Mammary epithelial cell (primary cell): ENCODE measurements at regions of chr4 and their contacts with region 1.

Region 1: GRCh38 chr4:39469429-39470077 is 10.7 kb downstream of the LIAS start:
- DNase-seq: peak; percentile 69
- H3K4me3 ChIP-seq: no peak overlapping the region
- H3K27ac ChIP-seq: peak overlapping the region; percentile 36
- H3K4me1 ChIP-seq: no peaks in the 10 kb centered on the region
- H3K27me3 ChIP-seq: no peaks in the 10 kb centered on the region
- CTCF ChIP-seq: peak; percentile 76 to 85

Region 2: DNA sequence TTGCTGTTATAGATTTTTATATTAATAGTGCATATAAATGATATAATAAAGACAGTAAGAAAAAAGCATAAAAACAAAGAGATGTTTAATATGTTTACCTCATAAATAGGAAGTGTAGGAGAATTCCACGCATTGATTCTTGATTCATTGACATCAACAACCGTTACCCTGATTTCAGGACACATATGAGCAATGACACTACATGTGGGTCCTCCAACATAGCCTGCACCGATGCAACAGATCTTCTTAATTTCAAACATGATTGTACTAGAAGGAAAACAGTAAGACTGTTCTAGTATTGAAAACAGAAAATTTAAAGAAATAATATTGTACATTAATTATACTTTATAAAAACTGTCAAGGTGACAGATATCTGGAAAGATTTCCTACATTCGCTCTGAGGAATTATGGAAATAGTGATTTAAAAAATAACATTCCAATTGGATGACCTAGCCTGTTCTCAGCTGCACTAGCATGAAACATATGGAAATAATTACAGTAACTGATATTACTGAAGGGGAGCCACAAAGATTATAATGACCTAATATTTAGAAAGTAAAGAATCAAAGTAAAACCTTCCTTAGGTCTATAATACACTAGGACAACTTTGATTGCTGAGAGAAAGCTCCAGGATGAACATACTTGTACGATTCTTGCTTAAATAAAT is 51.8 kb after region 1 on chr4:
- CTCF ChIA-PET with region 1: no interaction called
- dilution Hi-C with region 1: loop called (anchors 5 kb)
- in situ Hi-C with region 1: no loop called
- intact Hi-C with region 1: no loop called
- DNase-seq: no peak
- H3K4me3 ChIP-seq: no peak overlapping the region
- H3K27ac ChIP-seq: no peak overlapping the region
- H3K4me1 ChIP-seq: no peaks in the 10 kb centered on the region
- H3K27me3 ChIP-seq: no peaks in the 10 kb centered on the region
- CTCF ChIP-seq: no peak

Region 3: GRCh38 chr4:39527273-39528060 is 57.9 kb after region 1 on chr4 and contains the start of gene UGDH:
- CTCF ChIA-PET with region 1: no interaction called
- dilution Hi-C with region 1: loop called (anchors 5 kb)
- in situ Hi-C with region 1: no loop called
- intact Hi-C with region 1: loop called (anchors 1 kb)
- DNase-seq: peak; percentile 98
- H3K4me3 ChIP-seq: peak within 1 kb of the TSS; percentile 68 to 89 (median 87)
- H3K27ac ChIP-seq: peak within 1 kb of the TSS; percentile 85
- H3K4me1 ChIP-seq: peaks cover 8% of the 10 kb centered on the region
- H3K27me3 ChIP-seq: no peaks in the 10 kb centered on the region
- CTCF ChIP-seq: no peak
- total RNA-seq, gene UGDH: 46.8 to 69.0 TPM

Region 4: DNA sequence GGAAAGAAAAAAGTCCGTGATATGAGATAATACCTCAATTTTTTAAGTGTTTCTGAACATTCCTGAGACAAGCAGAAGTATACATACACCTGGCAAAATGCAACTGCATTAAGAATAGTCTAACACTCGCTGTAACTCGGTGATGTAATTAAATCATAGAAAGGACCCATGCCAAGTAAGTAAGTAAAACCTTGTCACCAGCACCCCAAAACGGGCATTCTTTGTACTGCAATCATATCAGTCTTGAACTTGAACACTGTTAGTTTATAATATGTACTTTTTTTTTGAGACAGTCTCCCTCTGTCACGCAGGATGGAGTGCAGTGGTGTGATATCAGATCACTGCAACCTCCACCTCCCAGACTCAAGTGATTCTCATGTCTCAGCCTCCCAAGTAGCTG is 121.7 kb after region 1 on chr4:
- CTCF ChIA-PET with region 1: interaction called, 6 read pairs
- dilution Hi-C with region 1: no loop called
- in situ Hi-C with region 1: no loop called
- intact Hi-C with region 1: loop called (anchors 1 kb)
- DNase-seq: peak; percentile 31
- H3K4me3 ChIP-seq: no peak overlapping the region
- H3K27ac ChIP-seq: no peak overlapping the region
- H3K4me1 ChIP-seq: no peaks in the 10 kb centered on the region
- H3K27me3 ChIP-seq: no peaks in the 10 kb centered on the region
- CTCF ChIP-seq: peak; percentile 23 to 46

Region 5: DNA sequence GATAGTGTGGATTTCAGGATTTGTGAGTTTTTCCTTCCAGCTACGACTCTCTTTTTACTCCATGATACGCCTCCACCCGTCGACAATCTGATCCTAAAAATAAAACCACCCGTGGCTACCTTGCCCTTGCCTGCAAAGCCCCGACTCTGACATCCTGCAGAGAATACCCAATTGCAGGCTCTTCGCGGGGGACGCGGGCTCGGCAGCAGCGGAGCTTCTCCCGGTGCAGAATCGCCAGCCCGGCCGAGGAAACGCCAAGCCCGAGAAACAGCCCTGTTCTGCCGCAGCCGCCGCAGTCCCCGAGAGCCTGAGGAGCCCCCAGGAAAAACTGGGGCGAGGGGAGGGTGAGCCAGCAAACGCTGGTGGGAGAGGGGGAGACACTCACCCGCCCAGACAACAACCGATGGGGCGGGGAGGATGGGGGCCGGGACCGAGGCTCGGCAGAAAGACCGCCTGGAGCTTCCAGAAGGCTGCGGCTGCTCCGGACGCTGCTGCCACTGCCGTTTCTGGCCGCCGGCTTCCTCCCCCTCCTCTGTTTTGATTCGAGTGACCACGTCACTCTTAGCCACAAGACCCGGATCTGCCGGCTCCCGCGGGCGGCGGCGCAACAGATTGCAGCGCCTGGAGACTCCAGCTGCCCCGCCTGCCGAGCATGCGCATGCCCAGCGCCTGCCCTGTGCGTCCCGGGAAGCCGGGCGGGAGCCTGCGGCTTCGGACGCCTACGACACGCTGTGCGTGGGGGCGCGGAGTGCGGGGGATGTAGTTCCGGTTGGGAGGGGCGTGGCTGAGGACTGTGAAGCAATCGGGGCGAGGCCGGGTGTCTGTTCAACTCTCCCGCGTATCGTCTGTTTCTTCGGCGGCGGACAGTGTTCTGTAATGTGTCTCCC is 169.0 kb after region 1 on chr4 and contains the start of gene SMIM14:
- CTCF ChIA-PET with region 1: no interaction called
- dilution Hi-C with region 1: no loop called
- in situ Hi-C with region 1: no loop called
- intact Hi-C with region 1: loop called (anchors 1 kb)
- DNase-seq: peak; percentile 98
- H3K4me3 ChIP-seq: peak within 1 kb of the TSS; percentile 66 to 93 (median 76)
- H3K27ac ChIP-seq: peak within 1 kb of the TSS; percentile 98
- H3K4me1 ChIP-seq: peaks cover 23% of the 10 kb centered on the region
- H3K27me3 ChIP-seq: no peaks in the 10 kb centered on the region
- CTCF ChIP-seq: peak in 1 of 2 donors; percentile 14
- total RNA-seq, gene SMIM14: 15.7 to 26.8 TPM

Region 6: GRCh38 chr4:39657465-39657864 is 187.9 kb after region 1 on chr4:
- CTCF ChIA-PET with region 1: no interaction called
- dilution Hi-C with region 1: no loop called
- in situ Hi-C with region 1: loop called in 1 of 2 experiments (anchors 10 kb)
- intact Hi-C with region 1: loop called (anchors 1 kb)
- DNase-seq: peak; percentile 8
- H3K4me3 ChIP-seq: no peak overlapping the region
- H3K27ac ChIP-seq: no peak overlapping the region
- H3K4me1 ChIP-seq: no peaks in the 10 kb centered on the region
- H3K27me3 ChIP-seq: no peaks in the 10 kb centered on the region
- CTCF ChIP-seq: no peak

Region 7: GRCh38 chr4:39977489-39978377 is 508.2 kb after region 1 on chr4 and contains the start of gene PDS5A:
- CTCF ChIA-PET with region 1: no interaction called
- dilution Hi-C with region 1: no loop called
- in situ Hi-C with region 1: loop called in 1 of 2 experiments (anchors 10 kb)
- intact Hi-C with region 1: loop called (anchors 1 kb)
- DNase-seq: peak; percentile 94
- H3K4me3 ChIP-seq: peak within 1 kb of the TSS; percentile 85 to 96 (median 87)
- H3K27ac ChIP-seq: peak within 1 kb of the TSS; percentile 80
- H3K4me1 ChIP-seq: peaks cover 10% of the 10 kb centered on the region
- H3K27me3 ChIP-seq: no peaks in the 10 kb centered on the region
- CTCF ChIP-seq: peak; percentile 73 to 83
- total RNA-seq, gene PDS5A: 72.2 to 78.5 TPM